ENCODE measurements at regions of chrX and their contacts with region 1.

Region 1: GRCh38 chrX:155108427-155108826 is 37.1 kb downstream of the BRCC3 start:
- DNase-seq: no peak
- ATAC-seq: no peak
- H3K4me3 ChIP-seq: no peak overlapping the region
- H3K4me3 Mint-ChIP-seq: no peak overlapping the region
- H3K27ac ChIP-seq: no peak overlapping the region
- H3K27ac Mint-ChIP-seq: no peak overlapping the region
- H3K4me1 ChIP-seq: no peaks in the 10 kb centered on the region
- H3K4me1 Mint-ChIP-seq: peaks cover 0 to 3% (median 0%) of the 10 kb centered on the region in 7 donors
- H3K27me3 ChIP-seq: no peaks in the 10 kb centered on the region
- H3K27me3 Mint-ChIP-seq: no peaks in the 10 kb centered on the region

Region 2: DNA sequence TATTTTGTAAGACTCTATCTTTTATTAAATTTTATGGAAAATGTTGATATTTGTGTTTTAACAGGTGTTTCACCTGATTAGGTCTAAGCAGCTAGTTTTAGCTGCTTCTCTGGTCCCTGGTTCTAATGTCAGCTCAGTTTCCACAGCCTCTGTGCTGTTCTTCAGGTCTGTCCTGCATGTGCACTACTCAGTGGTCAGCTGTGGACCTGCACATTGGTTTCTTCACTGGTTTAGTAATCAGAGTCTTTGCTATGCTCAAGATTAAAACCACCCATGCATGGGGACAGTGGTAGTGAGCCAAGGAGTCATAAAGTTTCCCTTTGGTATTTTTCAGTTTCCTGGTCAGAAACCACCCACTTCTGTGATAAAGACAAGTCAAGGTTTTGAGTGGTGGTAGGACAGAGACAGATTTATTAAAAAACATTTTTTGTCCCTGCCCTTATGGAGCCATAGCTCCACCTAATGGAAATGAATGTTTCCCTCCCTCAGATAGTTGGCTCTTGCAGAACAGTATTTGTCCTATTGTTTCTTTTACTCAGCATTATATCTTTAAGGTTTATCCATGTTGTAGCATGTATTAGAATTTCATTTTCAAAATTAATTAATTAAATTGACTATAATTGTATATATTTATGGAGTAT is 71.0 kb after region 1 on chrX:
- CTCF ChIA-PET with region 1: no interaction called
- POLR2A ChIA-PET with region 1: no interaction called
- intact Hi-C with region 1: loop called in 1 of 2 experiments (anchors 10 kb)
- DNase-seq: no peak
- ATAC-seq: no peak
- H3K4me3 ChIP-seq: no peak overlapping the region
- H3K4me3 Mint-ChIP-seq: no peak overlapping the region
- H3K27ac ChIP-seq: no peak overlapping the region
- H3K27ac Mint-ChIP-seq: no peak overlapping the region
- H3K4me1 ChIP-seq: no peaks in the 10 kb centered on the region
- H3K4me1 Mint-ChIP-seq: no peaks in the 10 kb centered on the region
- H3K27me3 ChIP-seq: no peaks in the 10 kb centered on the region
- H3K27me3 Mint-ChIP-seq: no peaks in the 10 kb centered on the region

Measured in naive thymus-derived CD4-positive, alpha-beta T cell (primary cell).